ENCODE measurements at regions of chr16 and their contacts with region 1.

Region 1: DNA sequence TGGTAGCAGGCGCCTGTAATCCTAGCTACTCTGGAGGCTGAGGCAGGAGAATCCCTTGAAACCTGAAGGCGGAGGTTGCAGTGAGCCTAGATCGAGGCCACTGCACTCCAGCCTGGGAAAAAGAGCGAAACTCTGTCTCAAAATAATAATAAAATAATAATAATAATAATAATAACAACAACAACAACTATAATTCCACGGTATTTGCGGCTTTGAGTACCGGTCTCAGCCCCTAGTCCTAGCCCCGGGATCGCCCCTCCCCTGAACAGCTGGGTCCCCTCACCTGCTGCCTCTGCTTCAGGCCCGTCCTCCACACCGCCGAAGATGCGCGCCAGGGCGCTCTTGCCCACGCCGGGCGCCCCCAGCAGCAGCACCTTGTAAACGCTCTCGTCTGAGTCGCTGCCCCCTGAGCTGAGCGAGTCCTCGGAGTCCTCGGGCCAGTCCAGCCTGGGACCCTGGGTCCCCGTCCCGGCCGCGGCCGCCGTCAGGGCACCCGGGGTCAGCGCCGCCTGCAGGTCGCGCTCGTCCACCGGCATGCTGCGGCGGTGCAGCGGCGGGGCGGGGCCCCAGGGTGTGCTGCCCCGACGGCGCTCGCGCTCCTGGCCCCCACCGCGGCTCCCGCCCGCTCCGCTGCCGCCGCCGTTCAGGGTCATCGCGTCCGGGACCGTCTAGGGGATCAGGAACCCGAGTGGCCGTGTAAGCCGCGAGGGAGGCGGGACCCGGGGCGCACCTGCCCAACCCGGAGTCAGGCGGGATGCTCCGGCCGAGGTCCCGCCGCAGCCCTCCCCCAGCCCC is 611 bp downstream of the RRAD start:
- DNase-seq: peak in 1 of 2 donors; percentile 81
- H3K4me3 ChIP-seq: peak overlapping the region; percentile 82 to 91
- H3K27ac ChIP-seq: peak overlapping the region; percentile 97
- H3K4me1 ChIP-seq: peaks cover 0 to 76% (median 58%) of the 10 kb centered on the region in 4 donors
- H3K27me3 ChIP-seq: no peaks in the 10 kb centered on the region
- CTCF ChIP-seq: peak; percentile 35 to 63

Region 2: GRCh38 chr16:66786551-66786950 is 138.2 kb before region 1 on chr16:
- intact Hi-C with region 1: no loop called
- DNase-seq: no peak
- H3K4me3 ChIP-seq: no peak overlapping the region
- H3K27ac ChIP-seq: no peak overlapping the region
- H3K4me1 ChIP-seq: no peaks in the 10 kb centered on the region
- H3K27me3 ChIP-seq: no peaks in the 10 kb centered on the region
- CTCF ChIP-seq: no peak

Region 3: GRCh38 chr16:66902648-66903543 is 21.8 kb before region 1 on chr16:
- intact Hi-C with region 1: loop called (anchors 2 kb)
- DNase-seq: no peak
- H3K4me3 ChIP-seq: no peak overlapping the region
- H3K27ac ChIP-seq: peak overlapping the region; percentile 86 to 91
- H3K4me1 ChIP-seq: peaks cover 23 to 99% (median 84%) of the 10 kb centered on the region in 4 donors
- H3K27me3 ChIP-seq: no peaks in the 10 kb centered on the region
- CTCF ChIP-seq: no peak